ENCODE measurements at regions of chr10 and their contacts with region 1.

Region 1: DNA sequence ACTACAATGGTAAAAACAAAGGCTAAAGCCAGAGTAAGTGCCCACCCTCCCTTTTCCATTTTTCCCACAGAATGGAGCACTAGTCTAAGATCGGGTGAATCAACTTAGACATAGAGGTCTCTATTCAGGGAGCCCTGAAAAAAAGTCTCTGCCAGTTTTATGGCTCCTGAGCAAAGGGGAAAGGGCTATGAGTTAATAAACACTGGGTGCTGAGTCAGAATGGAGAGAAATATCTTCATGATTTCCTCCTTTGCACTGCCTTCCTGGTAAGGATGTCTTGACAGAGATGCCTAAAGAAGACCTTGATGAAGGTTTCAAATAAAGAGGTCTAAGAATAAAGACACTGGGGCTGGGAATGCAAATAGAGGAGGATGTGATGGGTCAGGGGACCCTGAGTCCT is 607.4 kb upstream of the MBL2 start:
- DNase-seq: no peak

Region 2: GRCh38 chr10:53102424-53102823 is 277.5 kb before region 1 on chr10:
- intact Hi-C with region 1: loop called (anchors 5 kb)
- DNase-seq: no peak

Region 3: DNA sequence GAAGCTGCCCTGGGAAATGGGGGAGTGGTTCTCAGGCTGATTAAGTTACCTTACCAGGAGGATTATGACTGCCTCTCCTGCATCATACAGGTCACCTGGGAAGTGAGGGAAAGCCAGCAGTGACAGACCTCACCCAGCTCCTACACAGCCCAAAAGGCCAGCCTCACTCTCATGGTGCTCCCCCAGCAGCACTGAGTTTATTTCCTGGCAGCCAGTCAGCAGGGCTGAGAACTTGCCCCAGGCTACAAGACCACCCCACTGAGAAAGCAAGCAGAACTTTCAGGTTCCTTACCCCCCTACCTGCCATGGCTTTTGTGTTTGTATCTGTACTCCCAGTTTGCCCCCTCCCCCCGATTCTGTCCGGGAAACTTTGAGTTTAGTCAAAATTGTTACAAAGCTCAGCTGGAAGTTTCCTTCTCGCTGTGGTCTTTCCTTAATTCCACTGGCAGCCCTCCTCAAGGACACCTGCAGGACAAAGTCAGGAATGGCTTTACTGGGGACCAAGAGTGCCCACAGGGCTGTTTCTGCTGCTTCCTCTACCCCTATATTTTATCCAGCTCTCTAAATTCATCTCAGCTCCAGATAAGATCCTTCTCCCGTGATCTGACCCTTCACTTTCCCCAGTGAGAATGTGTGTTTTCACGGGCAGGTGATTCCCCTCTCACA is 42.4 kb after region 1 on chr10:
- intact Hi-C with region 1: no loop called
- DNase-seq: peak in 1 of 10 donors; percentile 52

Measured in posterior cingulate gyrus (tissue), 11 donors.